ENCODE measurements at regions of chr4 and their contacts with region 1.

Region 1: GRCh38 chr4:171538601-171539100 is 274.6 kb upstream of the GALNTL6 start:
- DNase-seq: no peak
- ATAC-seq: no peak
- H3K4me3 ChIP-seq: no peak overlapping the region
- H3K4me3 Mint-ChIP-seq: no peak overlapping the region
- H3K27ac ChIP-seq: no peak overlapping the region
- H3K27ac Mint-ChIP-seq: no peak overlapping the region
- H3K4me1 ChIP-seq: no peaks in the 10 kb centered on the region
- H3K4me1 Mint-ChIP-seq: no peaks in the 10 kb centered on the region
- H3K27me3 ChIP-seq: no peaks in the 10 kb centered on the region
- H3K27me3 Mint-ChIP-seq: no peaks in the 10 kb centered on the region

Region 2: DNA sequence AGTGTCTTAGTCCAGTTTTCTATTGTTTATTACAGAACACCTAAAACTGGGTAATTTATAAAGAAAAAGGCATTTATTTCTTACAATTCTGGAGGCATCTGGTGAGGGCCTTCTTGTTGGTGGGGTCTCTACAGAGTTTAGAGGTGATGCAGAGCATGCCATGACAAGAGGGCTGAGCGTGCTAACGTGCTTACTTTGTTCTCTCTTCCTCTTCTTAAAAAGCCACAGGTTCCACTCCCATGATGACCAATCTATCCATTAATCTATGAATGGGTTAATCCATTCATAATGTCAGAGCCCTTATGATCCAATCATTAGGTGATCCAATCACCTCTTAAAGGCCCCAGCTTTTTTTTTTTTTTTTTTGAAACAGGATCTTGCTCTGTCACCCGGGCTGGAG is 16.9 kb before region 1 on chr4:
- CTCF ChIA-PET with region 1: no interaction called
- POLR2A ChIA-PET with region 1: interaction called in 1 of 2 experiments, 10 read pairs
- DNase-seq: no peak
- ATAC-seq: no peak
- H3K4me3 ChIP-seq: no peak overlapping the region
- H3K4me3 Mint-ChIP-seq: no peak overlapping the region
- H3K27ac ChIP-seq: no peak overlapping the region
- H3K27ac Mint-ChIP-seq: no peak overlapping the region
- H3K4me1 ChIP-seq: no peaks in the 10 kb centered on the region
- H3K4me1 Mint-ChIP-seq: no peaks in the 10 kb centered on the region
- H3K27me3 ChIP-seq: no peaks in the 10 kb centered on the region
- H3K27me3 Mint-ChIP-seq: no peaks in the 10 kb centered on the region

Measured in T-cell (primary cell).